Activated CD4-positive, alpha-beta T cell treated with anti-CD3 and anti-CD28 coated beads for 36 hours (primary cell): ENCODE measurements at regions of chr2 and their contacts with region 1.

Region 1: DNA sequence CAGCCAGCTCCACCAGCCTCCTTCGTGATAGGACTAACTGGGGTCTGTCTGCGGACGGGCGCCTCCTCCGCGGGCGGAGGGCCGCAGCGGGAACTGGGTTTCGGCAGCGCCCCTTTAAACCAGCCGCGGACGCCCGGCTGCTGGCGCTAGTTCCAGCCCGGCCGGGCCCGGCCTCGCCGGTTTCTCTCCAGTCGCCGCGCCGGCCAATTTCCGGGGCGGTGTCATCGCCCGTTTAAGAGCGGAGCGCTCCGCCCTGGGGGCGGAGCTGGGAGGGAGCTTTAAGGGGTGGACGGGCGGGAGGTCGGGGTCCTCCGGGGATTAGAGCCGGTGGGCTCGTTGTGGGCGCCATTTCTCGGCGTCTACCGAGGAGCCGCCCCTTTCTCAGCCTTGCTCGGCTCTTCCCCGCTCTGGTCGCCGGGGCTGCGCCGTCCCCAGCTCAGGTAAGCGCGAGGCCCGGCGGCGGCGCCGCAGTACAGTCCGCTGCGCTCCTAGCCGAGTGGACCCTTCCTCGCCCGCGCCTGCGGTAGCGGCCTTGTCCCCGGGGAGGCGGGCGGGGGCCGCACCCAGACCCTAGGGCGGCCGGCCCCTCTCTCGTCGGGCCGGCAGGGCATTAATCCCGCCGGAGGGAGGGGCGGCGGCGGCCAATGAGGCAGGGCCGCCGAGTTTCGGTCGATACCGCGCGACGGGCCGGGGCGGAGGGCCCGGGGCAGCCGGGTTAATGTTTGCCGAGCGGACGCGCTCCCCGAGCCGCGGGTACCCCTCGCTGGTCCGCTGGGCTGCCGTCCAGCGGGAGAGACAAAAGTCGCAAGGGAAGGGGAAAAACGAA is at the start of gene EPB41L5:
- DNase-seq: peak; percentile 90
- ATAC-seq: peak; percentile 95
- H3K4me3 Mint-ChIP-seq: peak within 1 kb of the TSS; percentile 73
- H3K27ac Mint-ChIP-seq: peak within 1 kb of the TSS; percentile 66
- H3K4me1 Mint-ChIP-seq: peaks cover 19% of the 10 kb centered on the region
- H3K27me3 Mint-ChIP-seq: no peaks in the 10 kb centered on the region
- total RNA-seq, gene EPB41L5: 2.2 to 2.4 TPM

Region 2: GRCh38 chr2:119678998-119679710 is 333.8 kb before region 1 on chr2 and contains the start of gene TMEM177:
- CTCF ChIA-PET with region 1: no interaction called
- POLR2A ChIA-PET with region 1: interaction called, 6 read pairs
- intact Hi-C with region 1: loop called in 1 of 2 experiments (anchors 1 kb)
- DNase-seq: peak; percentile 94
- ATAC-seq: peak; percentile 93
- H3K4me3 Mint-ChIP-seq: peak within 1 kb of the TSS; percentile 87
- H3K27ac Mint-ChIP-seq: peak within 1 kb of the TSS; percentile 88
- H3K4me1 Mint-ChIP-seq: peaks cover 33% of the 10 kb centered on the region
- H3K27me3 Mint-ChIP-seq: no peaks in the 10 kb centered on the region
- total RNA-seq, gene TMEM177: 13.6 to 15.8 TPM

Region 3: DNA sequence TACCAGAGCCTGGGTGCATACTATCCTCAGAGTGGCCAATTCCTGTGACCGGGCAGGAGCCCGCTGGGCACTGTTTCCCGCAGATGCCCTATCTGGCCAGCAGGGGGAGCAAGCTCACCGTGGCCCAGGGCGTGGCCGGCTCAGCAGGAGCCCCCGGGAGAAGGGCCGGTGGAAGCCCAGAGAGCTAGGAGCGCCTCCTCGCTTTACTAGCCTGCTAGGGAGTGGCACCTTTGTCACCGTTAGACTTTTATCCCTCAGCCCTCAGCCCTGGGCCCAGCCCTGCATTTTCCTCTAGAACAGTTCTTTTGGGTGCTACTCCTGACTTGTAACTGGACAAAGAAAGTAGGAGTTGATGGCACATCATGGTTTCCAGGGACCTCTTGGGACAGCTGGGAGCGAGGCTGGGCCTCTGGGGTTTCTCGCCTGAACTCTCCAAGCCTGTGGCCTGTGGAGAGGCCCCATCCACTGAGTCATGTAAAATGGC is 310.0 kb before region 1 on chr2:
- CTCF ChIA-PET with region 1: no interaction called
- POLR2A ChIA-PET with region 1: no interaction called
- intact Hi-C with region 1: loop called (anchors 2 to 10 kb)
- DNase-seq: peak; percentile 82
- ATAC-seq: peak; percentile 81
- H3K4me3 Mint-ChIP-seq: no peak overlapping the region
- H3K27ac Mint-ChIP-seq: no peak overlapping the region
- H3K4me1 Mint-ChIP-seq: peaks cover 21% of the 10 kb centered on the region
- H3K27me3 Mint-ChIP-seq: no peaks in the 10 kb centered on the region

Region 4: DNA sequence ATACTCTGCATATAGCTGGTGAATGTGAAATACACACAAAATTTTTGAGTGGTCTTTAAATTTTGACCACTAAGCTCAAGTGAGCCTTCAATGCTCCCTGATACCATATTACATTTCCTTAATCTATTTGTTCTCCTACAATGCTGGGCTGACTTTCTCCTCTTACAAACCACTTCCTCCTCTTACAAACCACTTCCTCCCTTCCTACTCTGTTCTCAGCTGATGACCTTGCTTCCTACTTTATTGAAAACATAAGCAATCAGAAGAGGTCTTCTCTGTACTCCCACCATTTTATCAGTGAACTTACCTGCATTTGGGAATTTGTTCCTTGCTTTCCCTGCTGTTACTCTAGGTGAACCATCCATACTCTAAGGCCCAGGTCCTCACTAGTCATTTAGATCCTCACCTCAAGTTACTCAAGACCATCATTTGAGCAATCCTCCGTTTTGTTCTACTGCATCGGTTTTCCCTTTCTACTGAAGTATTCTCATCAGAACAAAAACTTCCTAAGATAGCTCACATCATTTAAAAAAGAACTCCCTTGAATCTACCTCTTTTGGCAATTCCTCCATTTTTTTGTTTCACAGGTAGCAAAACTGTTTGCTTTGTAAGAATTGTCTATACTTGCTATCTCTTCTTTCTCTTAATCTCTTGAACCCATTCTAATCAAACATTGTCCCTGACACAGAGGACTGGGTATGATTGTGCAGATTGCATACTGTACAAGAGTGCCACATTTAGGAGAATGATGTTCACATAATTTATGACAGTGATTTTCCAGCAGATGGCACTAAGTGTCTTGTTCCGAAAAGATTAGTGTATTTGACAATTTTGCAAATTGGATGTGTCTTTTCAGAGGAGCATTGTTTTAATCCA is 96.4 kb after region 1 on chr2:
- CTCF ChIA-PET with region 1: interaction called, 3 read pairs
- POLR2A ChIA-PET with region 1: no interaction called
- intact Hi-C with region 1: loop called in 1 of 2 experiments (anchors 5 kb)
- DNase-seq: no peak
- ATAC-seq: peak; percentile 78
- H3K4me3 Mint-ChIP-seq: peak overlapping the region; percentile 3
- H3K27ac Mint-ChIP-seq: peak overlapping the region; percentile 88
- H3K4me1 Mint-ChIP-seq: peaks cover 28% of the 10 kb centered on the region
- H3K27me3 Mint-ChIP-seq: no peaks in the 10 kb centered on the region

Region 5: DNA sequence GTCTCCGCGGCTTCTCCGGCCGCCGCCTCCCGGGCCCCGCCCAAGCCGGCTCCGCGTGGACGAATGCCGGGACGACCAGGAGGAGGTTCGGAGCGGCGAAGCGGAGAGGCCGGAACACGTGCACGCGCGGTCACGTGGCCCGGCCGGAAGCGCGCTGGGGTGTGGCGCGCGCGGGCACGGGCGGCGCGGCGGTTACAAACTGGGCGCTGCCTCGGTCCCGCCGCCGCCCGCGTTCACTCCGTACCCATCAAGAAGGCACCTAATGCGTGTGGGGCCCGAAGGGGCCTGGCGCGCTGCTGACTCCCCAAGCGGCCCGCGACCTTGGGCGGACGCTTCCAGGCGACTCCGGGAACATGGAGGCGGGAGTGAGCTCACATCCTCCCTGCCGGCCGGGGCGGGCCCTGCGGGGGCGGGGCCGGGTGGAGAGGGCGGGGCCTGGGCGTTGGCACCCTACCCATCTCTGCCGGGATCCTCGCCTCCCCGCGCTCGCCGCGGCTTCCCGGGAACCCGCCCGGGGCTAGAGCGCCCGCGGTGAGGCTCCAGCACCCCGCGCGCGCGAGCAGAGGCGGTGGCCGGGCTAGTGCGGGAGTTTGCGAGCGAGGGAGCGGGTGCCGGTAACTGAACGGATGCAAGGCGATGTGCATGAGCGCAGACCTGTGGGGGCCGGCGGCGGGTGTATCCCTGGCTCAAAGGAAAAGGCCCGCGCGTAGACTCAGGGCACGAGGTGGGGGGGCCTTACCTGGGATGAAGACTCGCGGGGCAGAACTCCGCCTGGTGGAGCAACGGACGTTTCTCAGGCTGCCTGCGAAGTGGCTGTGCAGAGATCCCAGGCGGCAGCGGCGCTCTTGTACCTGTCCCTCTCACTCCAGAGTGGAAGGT is 210.3 kb after region 1 on chr2 and contains the start of gene TMEM185B:
- CTCF ChIA-PET with region 1: no interaction called
- POLR2A ChIA-PET with region 1: no interaction called
- intact Hi-C with region 1: loop called in 1 of 2 experiments (anchors 1 kb)
- DNase-seq: peak; percentile 95
- ATAC-seq: peak; percentile 90
- H3K4me3 Mint-ChIP-seq: peak within 1 kb of the TSS; percentile 76
- H3K27ac Mint-ChIP-seq: peak within 1 kb of the TSS; percentile 93
- H3K4me1 Mint-ChIP-seq: peaks cover 50% of the 10 kb centered on the region
- H3K27me3 Mint-ChIP-seq: no peaks in the 10 kb centered on the region
- total RNA-seq, gene TMEM185B: 15.9 to 17.3 TPM

Region 6: GRCh38 chr2:120252225-120253021 is 239.4 kb after region 1 on chr2 and contains the start of gene RALB:
- CTCF ChIA-PET with region 1: no interaction called
- POLR2A ChIA-PET with region 1: no interaction called
- intact Hi-C with region 1: loop called in 1 of 2 experiments (anchors 1 kb)
- DNase-seq: peak; percentile 100
- ATAC-seq: peak; percentile 95
- H3K4me3 Mint-ChIP-seq: peak within 1 kb of the TSS; percentile 92
- H3K27ac Mint-ChIP-seq: peak within 1 kb of the TSS; percentile 86
- H3K4me1 Mint-ChIP-seq: peaks cover 41% of the 10 kb centered on the region
- H3K27me3 Mint-ChIP-seq: peaks cover 6% of the 10 kb centered on the region
- total RNA-seq, gene RALB: 34.0 to 34.3 TPM

Region 7: GRCh38 chr2:121095257-121096080 is 1082.5 kb after region 1 on chr2:
- CTCF ChIA-PET with region 1: no interaction called
- POLR2A ChIA-PET with region 1: no interaction called
- intact Hi-C with region 1: no loop called
- DNase-seq: peak; percentile 64
- ATAC-seq: peak; percentile 51
- H3K4me3 Mint-ChIP-seq: no peak overlapping the region
- H3K27ac Mint-ChIP-seq: no peak overlapping the region
- H3K4me1 Mint-ChIP-seq: no peaks in the 10 kb centered on the region
- H3K27me3 Mint-ChIP-seq: no peaks in the 10 kb centered on the region